ENCODE measurements at regions of chr11 and their contacts with region 1.

Region 1: GRCh38 chr11:116109228-116109627 is 605.0 kb upstream of the CADM1 start:
- DNase-seq: no peak
- ATAC-seq: no peak
- H3K4me3 ChIP-seq: no peak overlapping the region
- H3K4me3 Mint-ChIP-seq: no peak overlapping the region
- H3K27ac ChIP-seq: no peak overlapping the region
- H3K27ac Mint-ChIP-seq: no peak overlapping the region
- H3K4me1 ChIP-seq: no peaks in the 10 kb centered on the region
- H3K4me1 Mint-ChIP-seq: no peaks in the 10 kb centered on the region
- H3K27me3 ChIP-seq: no peaks in the 10 kb centered on the region
- H3K27me3 Mint-ChIP-seq: peaks cover 2% of the 10 kb centered on the region
- CTCF ChIP-seq: no peak

Region 2: GRCh38 chr11:115459563-115459962 is 649.7 kb before region 1 on chr11:
- CTCF ChIA-PET with region 1: no interaction called
- POLR2A ChIA-PET with region 1: no interaction called
- intact Hi-C with region 1: loop called in 1 of 2 experiments (anchors 5 kb)
- DNase-seq: no peak
- ATAC-seq: no peak
- H3K4me3 ChIP-seq: no peak overlapping the region
- H3K4me3 Mint-ChIP-seq: no peak overlapping the region
- H3K27ac ChIP-seq: no peak overlapping the region
- H3K27ac Mint-ChIP-seq: no peak overlapping the region
- H3K4me1 ChIP-seq: no peaks in the 10 kb centered on the region
- H3K4me1 Mint-ChIP-seq: no peaks in the 10 kb centered on the region
- H3K27me3 ChIP-seq: no peaks in the 10 kb centered on the region
- H3K27me3 Mint-ChIP-seq: peaks cover 5% of the 10 kb centered on the region
- CTCF ChIP-seq: no peak

Measured in CD8-positive, alpha-beta T cell (primary cell).